ENCODE measurements at regions of chr2 and their contacts with region 1.

Region 1: DNA sequence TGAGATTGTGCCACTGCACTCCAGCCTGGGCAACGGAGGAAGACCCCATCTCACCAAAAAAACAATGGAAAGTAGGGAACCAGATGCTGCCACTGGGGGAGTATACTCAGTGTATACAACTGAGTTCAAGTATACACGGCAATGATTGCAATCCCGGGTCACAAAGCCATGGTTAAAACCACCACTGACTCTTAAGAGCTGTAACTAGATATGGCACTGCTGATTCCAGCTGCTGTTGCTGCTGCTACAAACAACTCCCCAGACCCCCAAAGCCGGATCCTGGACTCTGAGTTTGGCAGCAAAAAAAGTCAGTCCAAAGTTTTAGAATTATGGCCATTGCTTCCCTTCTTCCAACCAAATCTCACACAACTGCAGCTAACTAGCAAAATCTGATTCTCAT is 43.7 kb upstream of the COX7A2L start:
- DNase-seq: no peak
- H3K4me3 ChIP-seq: no peak overlapping the region
- H3K27me3 ChIP-seq: no peaks in the 10 kb centered on the region; the same call in 1 of the 2 replicates
- CTCF ChIP-seq: no peak

Region 2: DNA sequence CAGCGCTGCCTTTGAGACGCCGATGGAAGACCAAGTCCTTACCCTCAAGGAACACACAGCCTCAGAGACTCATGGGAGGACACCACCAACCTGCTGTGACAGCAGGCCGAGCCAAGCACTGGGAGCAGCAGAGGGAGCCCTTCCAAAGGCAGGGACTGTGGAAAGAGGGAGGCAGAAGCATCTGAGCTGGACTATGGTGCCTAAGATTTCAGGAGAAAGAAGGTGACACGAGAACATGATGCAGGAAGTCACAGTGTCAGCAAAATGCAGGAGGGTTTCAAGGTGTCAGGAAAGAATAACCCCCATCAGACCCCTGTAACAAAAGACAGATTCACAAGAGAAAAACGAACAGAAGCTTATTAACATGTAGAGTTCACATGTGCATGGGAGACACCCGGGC is 19.5 kb before region 1 on chr2:
- CTCF ChIA-PET with region 1: interaction called, 3 read pairs
- POLR2A ChIA-PET with region 1: interaction called, 18 read pairs
- DNase-seq: no peak
- H3K4me3 ChIP-seq: no peak overlapping the region
- H3K27me3 ChIP-seq: peaks cover 6% of the 10 kb centered on the region; the same call in 1 of the 2 replicates
- CTCF ChIP-seq: peak; percentile 30